Activated T-helper 1 cell treated with anti-CD3 and anti-CD28 coated beads, Interleukin-12 subunit alpha, Interleukin-12 subunit beta, Interleukin-2, Interleukin-4 antibody, amounts not matched to agents 30 ng/mL and 10 ng/mL and 1 ng/mL, durations not matched to agents 14 hours and 24 hours and 36 hours (primary cell): ENCODE measurements at regions of chr3 and their contacts with region 1.

Region 1: GRCh38 chr3:126911162-126912026 is 71.5 kb upstream of the PLXNA1 start:
- DNase-seq: peak; percentile 81
- H3K4me3 Mint-ChIP-seq: peak overlapping the region; percentile 67
- H3K27ac Mint-ChIP-seq: peak overlapping the region; percentile 73
- H3K4me1 Mint-ChIP-seq: peaks cover 62% of the 10 kb centered on the region
- H3K27me3 Mint-ChIP-seq: no peaks in the 10 kb centered on the region

Region 2: GRCh38 chr3:126835898-126836860 is 75.2 kb before region 1 on chr3:
- intact Hi-C with region 1: no loop called
- DNase-seq: no peak
- H3K4me3 Mint-ChIP-seq: no peak overlapping the region
- H3K27ac Mint-ChIP-seq: no peak overlapping the region
- H3K4me1 Mint-ChIP-seq: no peaks in the 10 kb centered on the region
- H3K27me3 Mint-ChIP-seq: no peaks in the 10 kb centered on the region

Region 3: DNA sequence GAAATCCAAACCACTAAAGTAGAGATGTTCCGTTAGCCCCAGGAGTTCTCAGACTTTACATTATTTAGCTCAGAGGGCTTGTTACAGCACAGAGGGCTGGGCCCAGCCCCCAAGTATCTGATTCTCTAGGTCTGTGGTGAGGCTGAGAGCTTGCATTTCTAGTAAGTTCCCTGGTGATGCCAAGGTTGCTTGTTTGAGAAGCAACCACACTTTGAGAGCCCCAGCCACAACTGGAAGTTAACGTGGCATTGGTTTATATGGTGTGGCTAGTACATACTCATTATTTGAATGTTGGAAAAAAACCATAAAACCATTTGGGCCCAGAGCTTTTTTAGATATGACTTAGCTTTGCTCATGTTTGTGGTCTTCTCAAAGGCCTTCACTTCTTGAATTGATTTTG is 317.5 kb after region 1 on chr3:
- intact Hi-C with region 1: loop called (anchors 2 kb)
- DNase-seq: peak; percentile 8
- H3K4me3 Mint-ChIP-seq: no peak overlapping the region
- H3K27ac Mint-ChIP-seq: no peak overlapping the region
- H3K4me1 Mint-ChIP-seq: peaks cover 16% of the 10 kb centered on the region
- H3K27me3 Mint-ChIP-seq: peaks cover 7% of the 10 kb centered on the region

Region 4: GRCh38 chr3:127598841-127599570 is 687.6 kb after region 1 on chr3:
- intact Hi-C with region 1: loop called (anchors 5 kb)
- DNase-seq: no peak
- H3K4me3 Mint-ChIP-seq: peak overlapping the region; percentile 100
- H3K27ac Mint-ChIP-seq: peak overlapping the region; percentile 99
- H3K4me1 Mint-ChIP-seq: peaks cover 45% of the 10 kb centered on the region
- H3K27me3 Mint-ChIP-seq: no peaks in the 10 kb centered on the region